ENCODE measurements at regions of chr19 and their contacts with region 1.

Region 1: DNA sequence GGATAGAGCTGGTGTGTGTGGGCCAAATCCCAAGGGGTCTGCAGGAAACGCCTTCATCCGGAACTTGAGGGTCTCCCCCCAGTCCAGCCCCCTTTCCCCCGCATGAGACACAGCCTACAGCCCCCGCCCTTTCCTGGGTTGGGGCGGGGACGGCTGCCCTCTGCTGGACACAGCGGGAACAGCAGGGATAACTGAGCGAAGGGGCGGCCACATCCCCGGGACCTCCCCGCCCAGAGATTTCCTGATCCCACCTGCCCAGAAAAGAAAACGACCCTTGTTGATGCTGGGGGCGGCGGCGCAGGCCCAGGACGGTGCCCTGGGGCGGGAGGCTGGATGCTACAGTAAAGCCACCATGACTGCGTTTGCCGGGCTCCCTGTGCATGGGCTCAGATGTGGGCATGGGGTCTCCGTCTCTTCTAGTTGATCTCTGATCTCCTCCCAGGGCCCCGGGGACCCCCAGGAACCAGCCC is 14.2 kb downstream of the ONECUT3 start:
- DNase-seq: no peak
- H3K4me3 ChIP-seq: no peak overlapping the region
- CTCF ChIP-seq: peak; percentile 93

Region 2: GRCh38 chr19:1747285-1748114 is 20.0 kb before region 1 on chr19:
- CTCF ChIA-PET with region 1: interaction called, 16 read pairs
- POLR2A ChIA-PET with region 1: no interaction called
- DNase-seq: peak; percentile 10
- H3K4me3 ChIP-seq: no peak overlapping the region
- CTCF ChIP-seq: no peak

Region 3: DNA sequence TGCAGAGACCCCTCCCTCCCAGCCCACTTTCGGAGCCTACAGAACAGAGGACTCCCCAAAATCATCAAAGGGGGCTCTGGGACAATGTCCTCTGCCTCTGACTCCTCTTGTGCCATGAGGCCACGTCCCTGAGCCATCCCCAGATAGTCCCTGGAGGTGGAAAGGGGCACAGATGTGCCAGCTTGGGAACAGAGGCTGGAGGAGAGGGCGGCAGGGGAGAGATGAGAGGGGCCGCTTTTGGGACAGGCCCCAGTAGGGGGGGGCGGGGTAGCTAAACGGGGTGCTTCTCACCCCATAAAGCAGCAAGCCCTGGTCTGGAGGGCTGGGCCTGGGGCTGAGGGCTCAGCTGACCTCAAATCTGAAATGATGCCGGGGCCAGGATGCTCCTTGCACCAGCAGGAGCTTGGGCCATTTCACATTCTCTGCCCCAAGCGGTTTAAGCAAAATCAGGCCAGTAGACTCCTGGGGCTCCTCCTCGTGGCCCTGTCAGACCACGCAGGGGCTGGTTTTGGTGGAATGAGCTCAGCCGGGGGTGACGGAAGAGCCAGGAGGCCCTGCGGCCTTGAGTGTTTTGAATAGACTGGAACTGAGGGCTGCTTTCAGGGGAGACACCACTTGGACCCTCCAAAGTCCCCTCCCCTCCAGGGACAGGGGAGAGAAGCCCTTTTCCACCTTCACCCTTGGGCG is 12.9 kb after region 1 on chr19:
- CTCF ChIA-PET with region 1: interaction called, 40 read pairs
- POLR2A ChIA-PET with region 1: no interaction called
- DNase-seq: no peak
- H3K4me3 ChIP-seq: no peak overlapping the region
- CTCF ChIP-seq: peak; percentile 19

Region 4: GRCh38 chr19:1843646-1844394 is 76.3 kb after region 1 on chr19:
- CTCF ChIA-PET with region 1: no interaction called
- POLR2A ChIA-PET with region 1: no interaction called
- DNase-seq: no peak
- H3K4me3 ChIP-seq: no peak overlapping the region
- CTCF ChIP-seq: no peak

Region 5: DNA sequence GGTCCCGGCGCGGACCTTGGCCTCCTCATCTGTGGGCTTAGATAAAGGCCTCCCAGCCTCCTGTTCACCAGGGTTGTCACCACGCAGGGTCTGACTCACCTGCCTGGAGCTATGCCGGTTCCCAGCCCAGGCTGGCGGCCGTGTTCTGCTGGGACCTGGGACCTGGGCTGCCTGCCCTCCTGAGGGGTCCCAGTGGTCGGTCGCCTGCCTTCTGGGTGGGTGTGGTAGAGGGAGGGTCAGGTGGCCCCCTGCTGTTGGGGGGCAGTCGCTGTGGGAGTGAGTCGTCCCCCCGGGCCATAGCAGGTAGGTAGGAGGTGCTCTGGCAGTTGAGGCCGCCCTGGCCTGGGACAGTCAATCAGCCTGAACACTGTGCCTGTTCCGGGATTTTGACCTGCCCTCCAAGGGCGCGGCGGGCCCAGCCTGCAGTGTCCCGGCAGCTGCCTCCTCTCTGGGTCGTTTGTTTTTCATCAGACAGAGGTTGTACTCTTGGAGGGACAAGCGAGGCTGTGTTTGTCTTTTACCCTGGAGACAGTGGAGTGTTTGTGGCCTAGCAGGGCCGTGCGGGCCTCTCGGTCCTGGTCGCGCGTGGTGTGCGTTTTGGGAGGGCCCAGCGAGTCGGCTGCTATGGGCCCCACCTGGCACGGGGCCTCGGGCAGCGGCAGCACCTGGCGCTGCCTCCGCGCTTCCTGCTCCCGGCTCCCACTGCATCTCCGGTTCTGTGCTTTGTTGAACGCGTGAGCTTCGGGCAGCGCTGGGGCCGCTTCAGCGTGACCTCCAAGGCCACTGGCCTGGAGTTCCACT is 140.3 kb after region 1 on chr19:
- CTCF ChIA-PET with region 1: no interaction called
- POLR2A ChIA-PET with region 1: no interaction called
- DNase-seq: no peak
- H3K4me3 ChIP-seq: no peak overlapping the region
- CTCF ChIP-seq: no peak

Measured in AG04449 (cell line).